HepG2 (cell line): ENCODE measurements at regions of chr17 and their contacts with region 1.

Region 1: DNA sequence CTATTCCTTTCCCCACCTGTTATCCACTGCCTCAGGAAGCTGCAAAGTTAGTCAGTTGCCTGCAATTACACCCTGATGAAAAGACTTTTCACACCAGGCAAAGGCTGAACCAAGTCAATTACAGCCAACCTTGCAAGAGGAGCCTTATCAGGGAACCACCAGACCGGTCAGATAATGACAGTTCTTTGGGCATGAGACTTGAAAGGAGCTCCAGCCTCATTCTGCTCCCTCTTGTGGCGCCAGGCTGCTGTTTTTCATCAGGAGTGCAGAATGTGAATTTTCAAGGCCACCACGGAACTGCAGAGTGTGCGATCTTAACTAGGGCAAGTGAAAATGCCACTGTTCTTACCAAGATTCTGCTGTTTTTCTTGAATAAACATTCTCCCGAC is 22.5 kb downstream of the DNAI2 start:
- DNase-seq: peak; percentile 65
- ATAC-seq: peak; percentile 87
- H3K4me3 ChIP-seq: no peak overlapping the region
- H3K27ac ChIP-seq: no peak overlapping the region
- H3K4me1 ChIP-seq: peaks cover 8% of the 10 kb centered on the region; the same call in 1 of the 2 replicates
- H3K27me3 ChIP-seq: peaks cover 10 to 18% of the 10 kb centered on the region in 2 experiments
- CTCF ChIP-seq: peak; percentile 75
- EP300 ChIP-seq: no peak
- POLR2A ChIP-seq: no peak
- RAD21 ChIP-seq: 0 out of 2 replicates have a peak, but pooled peaks have one; percentile 24

Region 2: DNA sequence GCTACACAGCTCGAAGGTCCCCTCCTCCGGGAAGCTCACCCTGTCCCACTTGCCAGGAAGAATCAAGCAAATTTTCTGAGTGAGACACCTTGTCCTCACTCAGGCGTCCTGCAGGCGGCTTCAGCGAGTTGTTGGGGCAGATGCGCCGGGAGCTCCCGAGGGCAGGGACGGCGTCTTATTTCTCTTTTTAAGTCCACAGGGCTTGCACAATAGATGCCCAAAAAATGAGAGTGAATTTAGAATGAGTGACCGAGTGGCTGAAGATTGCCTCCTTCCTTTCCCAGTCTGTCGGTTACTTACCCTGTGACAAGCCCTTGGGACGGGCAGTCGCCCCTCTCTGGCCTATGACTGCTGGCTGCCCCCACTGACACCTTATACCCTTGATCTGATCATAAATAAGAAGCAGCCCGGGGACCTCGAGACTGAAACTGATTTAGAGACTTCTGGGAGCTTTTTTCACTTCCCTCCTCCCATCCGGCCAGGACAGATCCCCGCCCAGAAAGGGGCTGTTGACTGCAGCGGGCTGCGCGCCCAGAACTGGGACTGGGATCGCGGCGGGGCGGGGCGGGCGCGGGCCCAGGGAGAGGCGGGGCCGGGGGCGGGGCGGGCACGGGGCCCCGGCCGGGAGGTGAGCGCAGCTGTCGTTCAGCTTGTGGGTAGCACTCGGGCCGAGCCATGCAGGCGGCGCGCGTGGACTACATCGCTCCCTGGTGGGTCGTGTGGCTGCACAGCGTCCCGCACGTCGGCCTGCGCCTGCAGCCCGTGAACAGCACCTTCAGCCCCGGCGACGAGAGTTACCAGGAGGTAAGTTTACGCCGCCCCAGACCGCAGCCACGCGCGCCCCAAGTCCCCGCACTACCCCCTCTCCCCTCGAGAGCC is 83.4 kb before region 1 on chr17 and contains the start of gene TTYH2:
- CTCF ChIA-PET with region 1: no interaction called
- POLR2A ChIA-PET with region 1: interaction called, 3 read pairs
- in situ Hi-C with region 1: no loop called
- intact Hi-C with region 1: loop called (anchors 1 kb)
- DNase-seq: peak; percentile 77
- ATAC-seq: peak; percentile 74
- H3K4me3 ChIP-seq: peak within 1 kb of the TSS; percentile 51 to 63 (median 53)
- H3K27ac ChIP-seq: no peak within 1 kb of the TSS
- H3K4me1 ChIP-seq: peaks cover 49% of the 10 kb centered on the region
- H3K27me3 ChIP-seq: peaks cover 0 to 8% of the 10 kb centered on the region in 2 experiments; a peak in 3 of 5 replicates
- CTCF ChIP-seq: peak; percentile 21
- EP300 ChIP-seq: no peak
- POLR2A ChIP-seq: no peak
- RAD21 ChIP-seq: no peak
- total RNA-seq, gene TTYH2: 0.32 and 0.77 TPM in 2 replicates

Region 3: GRCh38 chr17:74259667-74260524 is 36.6 kb before region 1 on chr17:
- CTCF ChIA-PET with region 1: no interaction called
- POLR2A ChIA-PET with region 1: no interaction called
- in situ Hi-C with region 1: no loop called
- intact Hi-C with region 1: no loop called
- DNase-seq: no peak
- ATAC-seq: peak; percentile 47; the same call in 2 of the 3 replicates
- H3K4me3 ChIP-seq: no peak overlapping the region
- H3K27ac ChIP-seq: no peak overlapping the region
- H3K4me1 ChIP-seq: no peaks in the 10 kb centered on the region
- H3K27me3 ChIP-seq: peaks cover 3 to 13% of the 10 kb centered on the region in 2 experiments; a peak in 2 of 5 replicates
- CTCF ChIP-seq: no peak
- EP300 ChIP-seq: no peak
- POLR2A ChIP-seq: no peak
- RAD21 ChIP-seq: no peak

Region 4: GRCh38 chr17:74354123-74354522 is 57.6 kb after region 1 on chr17:
- CTCF ChIA-PET with region 1: interaction called, 9 read pairs
- POLR2A ChIA-PET with region 1: no interaction called
- in situ Hi-C with region 1: loop called (anchors 5 kb)
- intact Hi-C with region 1: loop called (anchors 1 kb)
- DNase-seq: peak; percentile 67
- ATAC-seq: peak; percentile 92
- H3K4me3 ChIP-seq: no peak overlapping the region
- H3K27ac ChIP-seq: no peak overlapping the region
- H3K4me1 ChIP-seq: no peaks in the 10 kb centered on the region
- H3K27me3 ChIP-seq: peaks cover 17 to 88% of the 10 kb centered on the region in 2 experiments; a peak in 4 of 5 replicates
- CTCF ChIP-seq: peak; percentile 92
- EP300 ChIP-seq: no peak
- POLR2A ChIP-seq: no peak
- RAD21 ChIP-seq: peak; percentile 98

Region 5: GRCh38 chr17:74361230-74362068 is 64.9 kb after region 1 on chr17 and contains the start of gene BTBD17:
- CTCF ChIA-PET with region 1: interaction called, 10 read pairs
- POLR2A ChIA-PET with region 1: no interaction called
- in situ Hi-C with region 1: no loop called
- intact Hi-C with region 1: loop called (anchors 1 kb)
- DNase-seq: peak; percentile 30
- ATAC-seq: peak; percentile 92
- H3K4me3 ChIP-seq: no peak within 1 kb of the TSS
- H3K27ac ChIP-seq: no peak within 1 kb of the TSS
- H3K4me1 ChIP-seq: no peaks in the 10 kb centered on the region
- H3K27me3 ChIP-seq: peaks cover 4 to 72% of the 10 kb centered on the region in 2 experiments; a peak in 4 of 5 replicates
- CTCF ChIP-seq: peak; percentile 93
- EP300 ChIP-seq: no peak
- POLR2A ChIP-seq: no peak
- RAD21 ChIP-seq: peak; percentile 64
- total RNA-seq, gene BTBD17: not detected in 2 replicates